ENCODE measurements at regions of chr7 and their contacts with region 1.

Region 1: GRCh38 chr7:63925623-63926460 is 72.8 kb upstream of the ZNF722 start:
- DNase-seq: peak; percentile 93
- H3K4me3 Mint-ChIP-seq: peak overlapping the region; percentile 93
- H3K27ac Mint-ChIP-seq: peak overlapping the region; percentile 96
- H3K4me1 Mint-ChIP-seq: peaks cover 9% of the 10 kb centered on the region
- H3K27me3 Mint-ChIP-seq: no peaks in the 10 kb centered on the region

Region 2: GRCh38 chr7:64045301-64046040 is 119.6 kb after region 1 on chr7 and contains the start of gene ZNF727:
- CTCF ChIA-PET with region 1: no interaction called
- intact Hi-C with region 1: loop called (anchors 1 kb)
- DNase-seq: peak; percentile 19
- H3K4me3 Mint-ChIP-seq: peak within 1 kb of the TSS; percentile 64
- H3K27ac Mint-ChIP-seq: no peak within 1 kb of the TSS
- H3K4me1 Mint-ChIP-seq: no peaks in the 10 kb centered on the region
- H3K27me3 Mint-ChIP-seq: peaks cover 5% of the 10 kb centered on the region
- total RNA-seq, gene ZNF727: 0.44 to 0.52 TPM

Region 3: DNA sequence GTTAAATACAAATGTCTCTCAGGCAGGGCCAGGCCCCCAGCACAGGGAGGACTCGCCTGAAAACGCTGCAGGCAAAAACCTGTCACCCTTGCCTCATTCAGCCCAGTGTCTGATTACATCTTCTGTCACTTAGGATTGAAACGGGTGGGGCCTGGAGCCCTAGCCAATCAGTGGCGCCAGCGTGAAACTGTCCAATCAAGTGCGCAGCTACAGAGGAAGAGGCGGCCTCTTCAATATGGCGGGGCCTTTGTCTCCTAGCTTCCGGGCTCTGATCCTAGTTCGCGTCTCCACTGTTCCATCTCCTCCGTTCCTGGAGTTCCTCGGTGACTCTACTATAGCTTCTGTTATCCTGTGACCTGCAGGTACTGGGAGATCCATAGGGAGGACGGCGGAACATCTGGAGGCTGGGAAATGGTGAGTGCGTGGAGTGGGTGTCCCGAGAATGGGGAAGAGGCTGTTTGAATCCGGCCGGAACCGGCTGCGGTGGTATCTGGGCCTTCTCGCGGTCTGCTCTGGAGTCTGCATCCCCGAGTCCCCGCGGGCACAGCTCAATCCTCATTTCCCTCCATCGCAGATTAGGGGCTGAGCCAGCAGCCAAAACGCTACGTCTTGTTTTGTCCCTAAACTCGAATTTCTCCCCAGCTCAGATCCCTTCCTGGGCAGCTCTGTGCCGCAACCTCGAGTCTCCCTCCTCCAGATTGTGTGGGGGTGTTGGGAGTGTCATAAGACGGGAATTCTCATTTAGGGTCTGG is 388.1 kb after region 1 on chr7 and contains the start of gene ZNF736:
- CTCF ChIA-PET with region 1: no interaction called
- intact Hi-C with region 1: loop called (anchors 1 kb)
- DNase-seq: peak; percentile 94
- H3K4me3 Mint-ChIP-seq: peak within 1 kb of the TSS; percentile 99
- H3K27ac Mint-ChIP-seq: peak within 1 kb of the TSS; percentile 97
- H3K4me1 Mint-ChIP-seq: peaks cover 35% of the 10 kb centered on the region
- H3K27me3 Mint-ChIP-seq: no peaks in the 10 kb centered on the region
- total RNA-seq, gene ZNF736: 22.7 to 24.0 TPM

Region 4: DNA sequence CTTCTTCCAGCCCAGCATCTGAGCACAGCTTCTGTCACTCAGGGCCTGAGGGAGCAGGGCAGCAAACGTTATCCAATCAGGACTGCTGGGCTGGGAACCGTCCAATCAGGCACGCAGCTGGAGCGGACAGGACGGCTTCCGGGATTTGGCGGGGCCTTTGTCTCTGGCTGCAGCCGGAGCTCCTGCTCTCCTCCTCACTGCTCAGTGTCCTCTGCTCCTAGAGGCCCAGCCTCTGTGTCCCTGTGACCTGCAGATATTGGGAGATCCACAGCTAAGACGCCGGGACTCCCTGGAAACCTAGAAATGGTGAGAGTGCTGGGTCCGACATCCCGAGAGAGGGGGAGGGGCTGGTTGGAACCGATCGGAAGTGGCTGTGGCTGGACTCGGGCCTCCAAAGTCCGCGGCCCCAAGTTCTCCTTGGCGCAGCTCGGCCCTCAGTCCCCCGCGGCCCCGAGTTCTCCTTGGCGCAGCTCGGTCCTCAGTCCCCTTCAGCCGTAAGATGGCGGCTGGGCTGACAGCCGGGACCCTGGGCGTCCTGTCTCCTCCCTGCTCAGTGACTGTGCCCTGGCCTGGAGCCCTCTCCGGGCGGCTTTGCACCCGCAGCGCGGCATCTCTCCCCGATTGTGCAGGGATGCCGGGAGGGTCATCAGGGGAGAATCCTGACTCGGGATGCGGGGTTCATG is 740.3 kb after region 1 on chr7 and contains the start of gene ZNF107:
- CTCF ChIA-PET with region 1: no interaction called
- intact Hi-C with region 1: loop called (anchors 2 kb)
- DNase-seq: peak; percentile 93
- H3K4me3 Mint-ChIP-seq: peak within 1 kb of the TSS; percentile 95
- H3K27ac Mint-ChIP-seq: peak within 1 kb of the TSS; percentile 96
- H3K4me1 Mint-ChIP-seq: peaks cover 47% of the 10 kb centered on the region
- H3K27me3 Mint-ChIP-seq: no peaks in the 10 kb centered on the region
- total RNA-seq, gene ZNF107: 7.7 to 8.0 TPM

Region 5: GRCh38 chr7:65006094-65006992 is 1080.5 kb after region 1 on chr7 and contains the start of gene ERV3-1:
- CTCF ChIA-PET with region 1: no interaction called
- intact Hi-C with region 1: loop called (anchors 1 kb)
- DNase-seq: peak; percentile 97
- H3K4me3 Mint-ChIP-seq: peak within 1 kb of the TSS; percentile 93
- H3K27ac Mint-ChIP-seq: peak within 1 kb of the TSS; percentile 85
- H3K4me1 Mint-ChIP-seq: peaks cover 28% of the 10 kb centered on the region
- H3K27me3 Mint-ChIP-seq: no peaks in the 10 kb centered on the region
- total RNA-seq, gene ERV3-1: 8.9 to 10.6 TPM